ENCODE measurements at regions of chr22 and their contacts with region 1.

Region 1: GRCh38 chr22:17084554-17085276 is at the start of gene IL17RA:
- DNase-seq: peak; percentile 89 to 95
- ATAC-seq: peak; percentile 94 to 99 (median 95)
- H3K4me3 ChIP-seq: peak within 1 kb of the TSS; percentile 83
- H3K4me3 Mint-ChIP-seq: peak within 1 kb of the TSS; percentile 96
- H3K27ac ChIP-seq: peak within 1 kb of the TSS; percentile 68
- H3K27ac Mint-ChIP-seq: peak within 1 kb of the TSS; percentile 83 to 91
- H3K4me1 ChIP-seq: peaks cover 50% of the 10 kb centered on the region
- H3K4me1 Mint-ChIP-seq: peaks cover 29 to 47% of the 10 kb centered on the region in 2 donors
- H3K27me3 ChIP-seq: no peaks in the 10 kb centered on the region
- H3K27me3 Mint-ChIP-seq: peaks cover 0 to 8% of the 10 kb centered on the region in 2 donors
- CTCF ChIP-seq: no peak
- total RNA-seq, gene IL17RA: 22.1 to 42.6 (median 28.7) TPM

Region 2: GRCh38 chr22:17158568-17159503 is 74.1 kb after region 1 on chr22 and contains the start of gene HDHD5:
- intact Hi-C with region 1: loop called (anchors 1 kb)
- DNase-seq: peak; percentile 84 to 94
- ATAC-seq: peak; percentile 93 to 97 (median 95)
- H3K4me3 ChIP-seq: peak within 1 kb of the TSS; percentile 77
- H3K4me3 Mint-ChIP-seq: peak within 1 kb of the TSS; percentile 93
- H3K27ac ChIP-seq: peak within 1 kb of the TSS; percentile 62
- H3K27ac Mint-ChIP-seq: peak within 1 kb of the TSS; percentile 48 to 74
- H3K4me1 ChIP-seq: peaks cover 24% of the 10 kb centered on the region
- H3K4me1 Mint-ChIP-seq: peaks cover 12 to 16% of the 10 kb centered on the region in 2 donors
- H3K27me3 ChIP-seq: no peaks in the 10 kb centered on the region
- H3K27me3 Mint-ChIP-seq: no peaks in the 10 kb centered on the region
- CTCF ChIP-seq: no peak
- total RNA-seq, gene HDHD5: 12.0 to 16.5 (median 13.5) TPM

Region 3: GRCh38 chr22:17773606-17774205 is 689.0 kb after region 1 on chr22:
- intact Hi-C with region 1: loop called (anchors 10 kb)
- DNase-seq: peak; percentile 79 to 81
- ATAC-seq: peak; percentile 52 to 72 (median 65)
- H3K4me3 ChIP-seq: peak overlapping the region; percentile 64
- H3K4me3 Mint-ChIP-seq: peak overlapping the region; percentile 94
- H3K27ac ChIP-seq: peak overlapping the region; percentile 59
- H3K27ac Mint-ChIP-seq: peak overlapping the region; percentile 82 to 90
- H3K4me1 ChIP-seq: peaks cover 90% of the 10 kb centered on the region
- H3K4me1 Mint-ChIP-seq: peaks cover 58 to 64% of the 10 kb centered on the region in 2 donors
- H3K27me3 ChIP-seq: no peaks in the 10 kb centered on the region
- H3K27me3 Mint-ChIP-seq: no peaks in the 10 kb centered on the region
- CTCF ChIP-seq: no peak